H1 (cell line): ENCODE measurements at regions of chr10 and their contacts with region 1.

Region 1: DNA sequence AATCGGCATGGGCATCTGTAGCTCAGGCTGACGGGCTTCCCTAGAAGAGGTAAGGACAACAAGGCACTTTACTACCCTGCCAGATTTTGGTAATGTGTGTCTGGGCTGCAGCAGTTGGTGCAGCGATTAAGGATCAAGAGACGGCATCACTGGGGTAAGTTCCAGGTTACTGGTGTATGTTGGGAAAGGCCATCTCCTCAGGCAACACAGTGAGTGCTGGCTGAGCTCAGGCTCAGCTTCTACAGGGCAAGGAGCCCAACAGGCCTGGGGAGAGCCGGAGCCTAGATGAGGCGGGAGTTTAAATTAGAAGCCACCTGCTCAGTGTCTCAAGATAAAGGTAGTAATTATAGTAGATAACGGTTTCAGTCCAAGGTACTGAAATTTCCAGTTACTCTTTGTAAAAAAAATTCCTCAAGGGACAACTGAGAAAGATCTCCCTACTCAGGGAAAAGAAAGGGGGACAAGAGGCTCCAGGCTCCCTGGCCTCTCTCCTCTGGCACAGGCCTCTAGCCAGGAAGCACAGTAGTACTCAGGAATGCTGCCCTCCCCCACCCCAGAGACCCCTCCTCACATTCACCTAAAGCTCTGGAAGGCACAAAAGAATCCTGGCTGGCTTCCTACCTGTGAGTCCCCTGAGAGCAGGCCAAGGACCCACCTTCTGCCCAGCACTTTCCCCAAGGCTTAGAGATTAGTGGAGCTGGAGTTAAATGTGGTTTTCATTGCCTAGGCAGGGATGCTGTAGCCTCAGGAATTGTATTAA is 3.9 kb downstream of the CXCL12 start:
- DNase-seq: no peak
- H3K4me3 ChIP-seq: peak overlapping the region in 1 of 4 experiments; percentile 78; a peak in 1 of 8 replicates
- H3K27ac ChIP-seq: no peak overlapping the region
- H3K4me1 ChIP-seq: peaks cover 19 to 42% (median 26%) of the 10 kb centered on the region in 4 experiments
- H3K27me3 ChIP-seq: peaks cover 2 to 26% (median 20%) of the 10 kb centered on the region in 4 experiments; a peak in 6 of 7 replicates
- CTCF ChIP-seq: no peak
- EP300 ChIP-seq: no peak
- POLR2A ChIP-seq: no peak
- RAD21 ChIP-seq: no peak

Region 2: GRCh38 chr10:44370731-44371248 is 10.2 kb before region 1 on chr10:
- CTCF ChIA-PET with region 1: interaction called, 18 read pairs
- POLR2A ChIA-PET with region 1: interaction called, 60 read pairs
- DNase-seq: peak; percentile 58 to 80
- H3K4me3 ChIP-seq: peak overlapping the region in 3 of 4 experiments; percentile 5 to 44 (median 23); a peak in 5 of 8 replicates
- H3K27ac ChIP-seq: peak overlapping the region; percentile 85
- H3K4me1 ChIP-seq: peaks cover 6 to 29% (median 19%) of the 10 kb centered on the region in 4 experiments
- H3K27me3 ChIP-seq: no peaks in the 10 kb centered on the region; a peak in 1 of 7 replicates
- CTCF ChIP-seq: peak; percentile 42 to 62 (median 54)
- EP300 ChIP-seq: 0 out of 3 replicates have a peak, but pooled peaks of 1 of the 2 experiments have one; percentile 22
- POLR2A ChIP-seq: no peak; a peak in 1 of 3 replicates
- RAD21 ChIP-seq: peak; percentile 47 to 61